PC-9 (cell line): ENCODE measurements at regions of chr12 and their contacts with region 1.

Region 1: GRCh38 chr12:64566122-64566521 is 44.2 kb upstream of the RASSF3 start:
- DNase-seq: no peak
- H3K4me3 ChIP-seq: no peak overlapping the region
- H3K27ac ChIP-seq: no peak overlapping the region
- H3K4me1 ChIP-seq: peaks cover 15% of the 10 kb centered on the region
- H3K27me3 ChIP-seq: no peaks in the 10 kb centered on the region
- CTCF ChIP-seq: no peak

Region 2: GRCh38 chr12:64160711-64161060 is 405.4 kb before region 1 on chr12:
- CTCF ChIA-PET with region 1: no interaction called
- POLR2A ChIA-PET with region 1: no interaction called
- intact Hi-C with region 1: no loop called
- DNase-seq: peak in 1 of 2 experiments; percentile 52
- H3K4me3 ChIP-seq: no peak overlapping the region
- H3K27ac ChIP-seq: peak overlapping the region; percentile 88
- H3K4me1 ChIP-seq: peaks cover 23% of the 10 kb centered on the region
- H3K27me3 ChIP-seq: no peaks in the 10 kb centered on the region
- CTCF ChIP-seq: no peak

Region 3: DNA sequence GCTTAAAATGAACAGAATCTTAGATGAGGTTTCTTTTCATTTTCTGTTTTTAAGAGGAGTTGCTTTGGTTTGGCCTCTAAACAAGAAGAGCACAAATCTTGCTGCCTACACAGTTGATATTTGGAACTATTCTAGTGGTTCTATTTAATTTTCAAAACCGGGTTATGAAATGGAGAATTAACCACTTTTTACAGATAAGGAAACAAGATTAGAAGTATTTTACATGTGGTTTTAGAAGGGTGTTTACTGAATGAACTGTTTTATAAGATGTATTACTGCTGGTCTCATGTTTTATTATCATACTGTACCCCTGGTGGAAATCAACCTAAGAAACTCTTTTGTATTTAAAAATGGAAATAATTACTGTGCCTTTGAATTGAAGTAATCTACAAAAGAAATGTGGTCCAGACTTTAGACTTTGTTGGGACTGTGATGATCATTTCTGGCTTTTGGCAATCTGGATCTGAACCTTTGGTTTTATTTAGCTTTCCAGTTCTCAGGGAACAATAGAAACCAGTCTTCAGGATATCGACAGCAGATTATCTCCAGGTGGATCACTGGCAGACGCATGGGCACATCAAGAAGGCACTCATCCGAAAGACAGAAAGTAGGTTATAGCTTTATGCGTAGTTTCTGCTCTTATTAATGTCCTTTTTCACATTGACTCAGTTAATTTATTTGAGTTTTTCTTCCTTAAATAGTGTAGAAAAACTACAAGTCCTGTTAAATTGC is 71.0 kb before region 1 on chr12:
- CTCF ChIA-PET with region 1: interaction called, 14 read pairs
- POLR2A ChIA-PET with region 1: no interaction called
- intact Hi-C with region 1: no loop called
- DNase-seq: no peak
- H3K4me3 ChIP-seq: no peak overlapping the region
- H3K27ac ChIP-seq: no peak overlapping the region
- H3K4me1 ChIP-seq: no peaks in the 10 kb centered on the region
- H3K27me3 ChIP-seq: no peaks in the 10 kb centered on the region
- CTCF ChIP-seq: no peak

Region 4: GRCh38 chr12:65051218-65051617 is 485.1 kb after region 1 on chr12:
- CTCF ChIA-PET with region 1: interaction called, 14 read pairs
- POLR2A ChIA-PET with region 1: no interaction called
- intact Hi-C with region 1: no loop called
- DNase-seq: no peak
- H3K4me3 ChIP-seq: no peak overlapping the region
- H3K27ac ChIP-seq: no peak overlapping the region
- H3K4me1 ChIP-seq: no peaks in the 10 kb centered on the region
- H3K27me3 ChIP-seq: no peaks in the 10 kb centered on the region
- CTCF ChIP-seq: no peak